PC-9 (cell line): ENCODE measurements at regions of chr4 and their contacts with region 1.

Region 1: DNA sequence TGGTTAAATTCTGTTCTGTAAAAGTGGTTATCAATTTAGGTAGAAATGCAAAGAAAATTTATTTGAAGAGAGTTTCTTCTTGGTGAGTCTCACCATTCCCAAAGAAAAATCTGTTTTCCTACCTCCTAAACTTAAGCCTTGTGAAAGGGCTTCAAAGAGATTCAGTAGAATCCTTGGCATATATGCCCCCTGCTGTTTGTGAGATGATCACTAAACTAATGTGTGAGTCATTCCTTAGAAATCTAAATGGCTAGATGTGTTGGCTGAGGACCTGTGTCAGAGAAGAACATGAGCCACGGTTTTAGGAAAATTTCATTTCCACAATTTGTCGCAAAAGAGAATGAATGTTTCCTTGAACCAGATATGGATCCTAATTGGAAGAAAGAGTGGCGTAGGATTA is 260.9 kb downstream of the SLC7A11 start:
- DNase-seq: no peak
- H3K4me3 ChIP-seq: no peak overlapping the region
- H3K27ac ChIP-seq: no peak overlapping the region
- H3K4me1 ChIP-seq: no peaks in the 10 kb centered on the region
- H3K27me3 ChIP-seq: no peaks in the 10 kb centered on the region
- CTCF ChIP-seq: no peak

Region 2: DNA sequence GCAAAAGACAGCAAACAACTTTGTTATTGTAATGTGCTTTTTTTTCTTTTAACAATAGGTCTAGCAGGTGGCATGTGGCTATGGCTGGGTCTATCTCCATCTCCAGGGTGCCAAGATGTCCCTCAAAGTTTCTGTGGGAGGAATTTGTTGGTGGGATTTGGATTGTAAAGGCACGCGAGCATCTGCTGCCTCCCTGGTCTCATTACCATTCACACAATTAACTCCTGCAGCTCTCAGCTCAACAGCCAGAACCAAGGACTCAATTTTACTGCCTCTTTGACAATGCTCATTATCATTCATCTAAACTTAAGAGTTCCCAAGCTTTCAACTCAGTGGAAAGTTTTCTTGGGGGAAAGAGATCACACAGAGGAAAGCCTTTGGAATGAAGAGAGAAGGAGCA is 438.1 kb before region 1 on chr4:
- CTCF ChIA-PET with region 1: interaction called, 12 read pairs
- POLR2A ChIA-PET with region 1: no interaction called
- intact Hi-C with region 1: no loop called
- DNase-seq: no peak
- H3K4me3 ChIP-seq: no peak overlapping the region
- H3K27ac ChIP-seq: no peak overlapping the region
- H3K4me1 ChIP-seq: no peaks in the 10 kb centered on the region
- H3K27me3 ChIP-seq: no peaks in the 10 kb centered on the region
- CTCF ChIP-seq: no peak